ENCODE measurements at regions of chr7 and their contacts with region 1.

Region 1: GRCh38 chr7:130904031-130904757 is 170.2 kb upstream of the KLF14 start:
- DNase-seq: peak; percentile 81 to 99
- H3K4me3 ChIP-seq: peak overlapping the region; percentile 96; the same call in 1 of the 2 replicates
- H3K27ac ChIP-seq: peak overlapping the region; percentile 99
- H3K4me1 ChIP-seq: peaks cover 97% of the 10 kb centered on the region
- H3K27me3 ChIP-seq: no peaks in the 10 kb centered on the region
- CTCF ChIP-seq: no peak

Region 2: GRCh38 chr7:130881091-130881798 is 22.9 kb before region 1 on chr7:
- CTCF ChIA-PET with region 1: no interaction called
- POLR2A ChIA-PET with region 1: interaction called, 10 read pairs
- intact Hi-C with region 1: loop called (anchors 2 kb)
- DNase-seq: no peak
- H3K4me3 ChIP-seq: no peak overlapping the region
- H3K27ac ChIP-seq: peak overlapping the region; percentile 10; the same call in 1 of the 2 replicates
- H3K4me1 ChIP-seq: peaks cover 28% of the 10 kb centered on the region
- H3K27me3 ChIP-seq: no peaks in the 10 kb centered on the region
- CTCF ChIP-seq: no peak

Region 3: GRCh38 chr7:130887182-130888016 is 16.8 kb before region 1 on chr7:
- CTCF ChIA-PET with region 1: interaction called, 6 read pairs
- POLR2A ChIA-PET with region 1: interaction called, 9 read pairs
- intact Hi-C with region 1: loop called (anchors 2 kb)
- DNase-seq: peak; percentile 71 to 90
- H3K4me3 ChIP-seq: peak overlapping the region; percentile 21; the same call in 1 of the 2 replicates
- H3K27ac ChIP-seq: peak overlapping the region; percentile 76
- H3K4me1 ChIP-seq: peaks cover 85% of the 10 kb centered on the region
- H3K27me3 ChIP-seq: no peaks in the 10 kb centered on the region
- CTCF ChIP-seq: no peak

Region 4: DNA sequence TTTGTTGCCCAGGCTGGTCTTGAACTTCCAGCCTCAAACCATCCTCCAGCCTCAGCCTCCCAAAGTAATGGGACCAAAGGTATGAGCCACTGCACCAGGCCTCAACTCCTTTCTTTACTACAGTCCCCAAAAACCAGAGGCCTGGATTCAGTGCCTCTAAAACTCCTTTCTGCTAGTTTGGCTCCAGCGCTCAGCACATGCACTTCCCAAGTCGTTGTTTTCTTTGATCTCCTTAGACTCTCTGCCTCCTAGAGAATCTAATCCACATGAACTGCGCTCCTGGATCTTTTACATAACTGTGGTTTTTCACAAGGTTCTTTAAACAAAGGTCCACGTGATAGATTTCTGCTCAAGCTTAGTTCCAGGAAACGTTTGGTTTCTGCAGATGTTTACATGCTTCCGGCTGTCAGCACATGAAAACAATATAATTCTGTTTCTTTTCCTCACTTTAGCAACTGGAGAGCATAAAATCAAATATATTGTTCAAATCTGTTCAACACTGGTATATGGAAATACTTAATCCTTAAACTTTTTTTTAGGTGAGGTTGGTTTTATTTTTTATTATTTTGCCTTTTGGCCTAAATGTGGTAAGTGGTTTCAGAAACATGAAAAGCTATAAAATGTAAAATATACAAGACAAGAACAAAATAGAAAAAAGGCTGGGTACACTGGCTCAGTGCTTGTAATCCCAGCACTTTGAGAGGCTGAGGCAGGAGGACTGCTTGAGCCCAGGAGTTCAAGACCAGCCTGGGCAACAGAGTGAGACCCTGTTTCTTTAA is 153.0 kb after region 1 on chr7:
- CTCF ChIA-PET with region 1: no interaction called
- POLR2A ChIA-PET with region 1: no interaction called
- intact Hi-C with region 1: no loop called
- DNase-seq: no peak
- H3K4me3 ChIP-seq: no peak overlapping the region
- H3K27ac ChIP-seq: peak overlapping the region; percentile 19; the same call in 1 of the 2 replicates
- H3K4me1 ChIP-seq: no peaks in the 10 kb centered on the region
- H3K27me3 ChIP-seq: no peaks in the 10 kb centered on the region
- CTCF ChIP-seq: no peak

Measured in PC-9 (cell line).